Naive thymus-derived CD4-positive, alpha-beta T cell (primary cell): ENCODE measurements at regions of chr4 and their contacts with region 1.

Region 1: GRCh38 chr4:40736910-40737309 is 12.8 kb upstream of the NSUN7 start:
- DNase-seq: no peak
- ATAC-seq: no peak
- H3K4me3 ChIP-seq: no peak overlapping the region
- H3K4me3 Mint-ChIP-seq: no peak overlapping the region
- H3K27ac ChIP-seq: no peak overlapping the region
- H3K27ac Mint-ChIP-seq: no peak overlapping the region
- H3K4me1 ChIP-seq: no peaks in the 10 kb centered on the region
- H3K4me1 Mint-ChIP-seq: peaks cover 0 to 20% (median 8%) of the 10 kb centered on the region in 7 donors
- H3K27me3 ChIP-seq: no peaks in the 10 kb centered on the region
- H3K27me3 Mint-ChIP-seq: peaks cover 0 to 14% (median 5%) of the 10 kb centered on the region in 5 donors

Region 2: DNA sequence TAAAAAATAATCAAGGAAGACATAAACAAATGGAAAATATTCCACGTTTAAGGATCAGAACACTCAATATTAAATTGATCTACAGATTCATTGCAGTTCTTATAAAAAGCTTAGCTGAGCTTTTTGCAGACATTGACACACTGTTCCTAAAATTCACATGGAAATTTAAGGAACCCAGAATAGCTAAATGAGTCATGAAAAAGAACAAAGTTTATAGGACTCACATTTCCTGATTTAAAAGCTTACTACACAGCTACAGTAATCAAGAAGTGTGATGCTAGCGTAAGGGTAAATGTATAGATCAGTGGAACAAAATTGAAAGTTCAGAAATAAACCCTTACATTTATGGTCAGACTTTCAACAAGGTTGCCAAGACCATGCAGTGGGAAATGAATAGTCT is 46.0 kb after region 1 on chr4:
- CTCF ChIA-PET with region 1: no interaction called
- POLR2A ChIA-PET with region 1: no interaction called
- intact Hi-C with region 1: no loop called
- DNase-seq: no peak
- ATAC-seq: no peak
- H3K4me3 ChIP-seq: no peak overlapping the region
- H3K4me3 Mint-ChIP-seq: no peak overlapping the region
- H3K27ac ChIP-seq: no peak overlapping the region
- H3K27ac Mint-ChIP-seq: no peak overlapping the region
- H3K4me1 ChIP-seq: no peaks in the 10 kb centered on the region
- H3K4me1 Mint-ChIP-seq: peaks cover 0 to 1% (median 0%) of the 10 kb centered on the region in 7 donors
- H3K27me3 ChIP-seq: no peaks in the 10 kb centered on the region
- H3K27me3 Mint-ChIP-seq: peaks cover 0 to 29% (median 17%) of the 10 kb centered on the region in 5 donors

Region 3: DNA sequence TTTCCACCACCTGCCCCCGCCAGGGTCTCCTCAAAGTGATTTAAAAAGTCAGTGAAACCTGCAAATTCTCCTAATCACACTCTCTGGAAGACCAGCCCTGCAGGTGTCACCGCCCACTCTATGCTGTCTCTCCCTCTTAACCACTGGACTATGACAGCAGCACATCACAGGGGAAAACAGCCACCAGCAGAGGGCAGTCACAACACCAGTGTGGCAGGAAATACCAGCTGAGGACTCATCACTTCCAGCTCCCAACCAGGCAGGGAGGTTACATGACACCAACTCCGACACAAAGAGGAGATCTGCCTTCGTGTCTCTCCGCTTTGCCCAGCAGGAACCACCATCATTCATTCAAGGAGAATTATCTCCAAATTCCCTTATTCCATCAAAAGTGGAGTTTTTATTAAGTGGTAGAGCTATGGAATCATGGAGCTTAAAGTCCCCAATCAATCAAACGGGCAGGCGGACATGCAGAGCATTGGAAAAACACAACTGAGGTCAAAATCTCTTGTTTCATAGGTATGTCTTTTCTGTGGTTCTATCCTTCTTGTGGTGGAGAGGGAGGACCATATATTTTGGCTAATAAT is 104.2 kb after region 1 on chr4:
- CTCF ChIA-PET with region 1: no interaction called
- POLR2A ChIA-PET with region 1: no interaction called
- intact Hi-C with region 1: loop called in 1 of 2 experiments (anchors 1 kb)
- DNase-seq: peak; percentile 8 to 75 (median 40)
- ATAC-seq: peak; percentile 87
- H3K4me3 ChIP-seq: no peak overlapping the region
- H3K4me3 Mint-ChIP-seq: no peak overlapping the region
- H3K27ac ChIP-seq: no peak overlapping the region
- H3K27ac Mint-ChIP-seq: no peak overlapping the region
- H3K4me1 ChIP-seq: no peaks in the 10 kb centered on the region
- H3K4me1 Mint-ChIP-seq: peaks cover 0 to 5% (median 0%) of the 10 kb centered on the region in 7 donors
- H3K27me3 ChIP-seq: no peaks in the 10 kb centered on the region
- H3K27me3 Mint-ChIP-seq: peaks cover 0 to 8% (median 0%) of the 10 kb centered on the region in 5 donors

Region 4: GRCh38 chr4:40897557-40898203 is 160.8 kb after region 1 on chr4:
- CTCF ChIA-PET with region 1: no interaction called
- POLR2A ChIA-PET with region 1: no interaction called
- intact Hi-C with region 1: loop called (anchors 1 kb)
- DNase-seq: peak; percentile 20 to 69 (median 42)
- ATAC-seq: peak; percentile 74
- H3K4me3 ChIP-seq: no peak overlapping the region
- H3K4me3 Mint-ChIP-seq: peak overlapping the region; percentile 6 to 84 (median 76)
- H3K27ac ChIP-seq: no peak overlapping the region
- H3K27ac Mint-ChIP-seq: peak overlapping the region in 3 of 9 donors; percentile 34 to 72 (median 38)
- H3K4me1 ChIP-seq: no peaks in the 10 kb centered on the region
- H3K4me1 Mint-ChIP-seq: peaks cover 0 to 5% (median 4%) of the 10 kb centered on the region in 7 donors
- H3K27me3 ChIP-seq: no peaks in the 10 kb centered on the region
- H3K27me3 Mint-ChIP-seq: no peaks in the 10 kb centered on the region

Region 5: GRCh38 chr4:40927074-40927473 is 190.2 kb after region 1 on chr4:
- CTCF ChIA-PET with region 1: no interaction called
- POLR2A ChIA-PET with region 1: no interaction called
- intact Hi-C with region 1: loop called in 1 of 2 experiments (anchors 2 kb)
- DNase-seq: no peak
- ATAC-seq: no peak
- H3K4me3 ChIP-seq: no peak overlapping the region
- H3K4me3 Mint-ChIP-seq: no peak overlapping the region
- H3K27ac ChIP-seq: no peak overlapping the region
- H3K27ac Mint-ChIP-seq: no peak overlapping the region
- H3K4me1 ChIP-seq: no peaks in the 10 kb centered on the region
- H3K4me1 Mint-ChIP-seq: peaks cover 0 to 6% (median 3%) of the 10 kb centered on the region in 7 donors
- H3K27me3 ChIP-seq: peaks cover 0 to 5% of the 10 kb centered on the region in 2 donors
- H3K27me3 Mint-ChIP-seq: peaks cover 6 to 24% (median 20%) of the 10 kb centered on the region in 5 donors